Colonic mucosa (tissue), 4 donors: ENCODE measurements at regions of chr3 and their contacts with region 1.

Region 1: DNA sequence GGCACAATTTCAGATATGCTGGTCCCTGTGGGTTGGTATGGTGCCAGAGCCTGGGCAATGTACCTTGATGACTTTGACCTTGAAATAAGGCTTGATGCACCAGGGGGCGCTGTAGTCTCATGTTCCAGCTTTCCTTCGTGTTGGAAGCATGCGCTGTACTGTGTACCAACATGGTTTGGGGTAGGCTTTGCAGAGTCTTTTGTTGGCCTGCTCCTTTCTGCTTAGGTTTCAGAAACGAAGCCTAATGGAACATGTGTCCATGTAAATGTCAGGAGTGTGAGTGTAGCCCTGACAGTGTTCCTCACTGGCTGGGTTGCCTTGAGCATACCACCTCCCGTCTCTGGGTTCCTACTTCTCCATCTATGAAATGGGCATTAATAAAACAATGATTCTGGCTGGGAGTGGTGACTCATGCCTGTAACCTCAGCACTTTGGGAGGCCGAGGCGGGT is 3.6 kb upstream of the CCR4 start:
- DNase-seq: peak; percentile 91
- H3K4me3 ChIP-seq: no peak overlapping the region
- H3K27ac ChIP-seq: no peak overlapping the region
- H3K4me1 ChIP-seq: no peaks in the 10 kb centered on the region
- H3K27me3 ChIP-seq: no peaks in the 10 kb centered on the region
- CTCF ChIP-seq: peak; percentile 56

Region 2: GRCh38 chr3:33074217-33075067 is 126.6 kb after region 1 on chr3:
- intact Hi-C with region 1: loop called (anchors 2 kb)
- DNase-seq: peak; percentile 70
- H3K4me3 ChIP-seq: no peak overlapping the region
- H3K27ac ChIP-seq: no peak overlapping the region
- H3K4me1 ChIP-seq: no peaks in the 10 kb centered on the region
- H3K27me3 ChIP-seq: no peaks in the 10 kb centered on the region
- CTCF ChIP-seq: peak; percentile 85

Region 3: GRCh38 chr3:33146791-33147445 is 199.1 kb after region 1 on chr3:
- intact Hi-C with region 1: no loop called
- DNase-seq: no peak
- H3K4me3 ChIP-seq: no peak overlapping the region
- H3K27ac ChIP-seq: no peak overlapping the region
- H3K4me1 ChIP-seq: no peaks in the 10 kb centered on the region
- H3K27me3 ChIP-seq: no peaks in the 10 kb centered on the region
- CTCF ChIP-seq: no peak

Region 4: DNA sequence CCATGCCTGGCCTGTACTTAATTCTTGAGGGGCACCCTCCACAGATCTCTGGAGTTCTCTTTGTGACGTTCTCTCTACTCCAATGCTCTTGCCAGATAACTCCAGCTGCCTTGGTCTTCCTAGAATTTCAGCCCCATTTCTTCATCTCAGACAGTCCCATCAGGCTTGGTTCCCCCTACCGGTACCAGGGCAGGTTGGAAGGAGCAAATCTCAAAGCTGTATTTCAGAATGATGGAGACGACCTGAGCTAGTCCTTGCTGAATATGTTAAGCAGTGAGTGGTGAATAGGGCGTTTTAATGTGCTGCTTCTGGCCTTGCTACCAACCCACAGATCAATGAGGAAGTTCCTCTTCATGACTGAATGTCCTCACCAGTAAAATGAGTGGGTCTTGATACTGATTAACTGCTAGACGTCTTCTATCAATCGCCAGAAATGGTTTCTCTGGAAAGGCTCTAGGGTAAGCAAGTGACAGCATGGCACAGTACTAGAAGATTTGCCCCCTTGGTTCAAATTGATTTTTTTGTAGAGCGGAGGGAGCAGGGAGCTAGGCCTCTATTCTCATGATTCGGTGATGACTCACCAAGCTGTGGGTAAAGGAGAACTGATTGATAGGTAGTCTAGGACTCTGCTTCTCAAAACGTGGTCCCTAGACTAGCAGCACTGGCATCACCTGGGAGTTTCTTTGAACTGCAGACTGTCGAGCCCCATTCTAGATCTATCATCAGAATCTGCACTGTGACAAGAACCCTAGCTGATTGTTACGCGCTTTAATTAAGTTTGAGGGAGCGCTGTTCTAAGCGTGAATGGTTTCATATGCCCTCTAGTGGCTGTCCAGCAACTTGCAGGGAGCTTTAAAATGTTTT is 424.6 kb after region 1 on chr3:
- intact Hi-C with region 1: loop called (anchors 5 kb)
- DNase-seq: peak; percentile 45
- H3K4me3 ChIP-seq: no peak overlapping the region
- H3K27ac ChIP-seq: no peak overlapping the region
- H3K4me1 ChIP-seq: no peaks in the 10 kb centered on the region
- H3K27me3 ChIP-seq: no peaks in the 10 kb centered on the region
- CTCF ChIP-seq: peak; percentile 89